ENCODE measurements at regions of chrX and their contacts with region 1.

Region 1: GRCh38 chrX:23782863-23783568 is at the start of gene SAT1:
- DNase-seq: peak; percentile 95
- H3K4me3 ChIP-seq: peak within 1 kb of the TSS; percentile 65 to 80
- H3K27ac ChIP-seq: peak within 1 kb of the TSS; percentile 84 to 86
- H3K4me1 ChIP-seq: no peaks in the 10 kb centered on the region
- H3K27me3 ChIP-seq: no peaks in the 10 kb centered on the region
- CTCF ChIP-seq: peak; percentile 67 to 91 (median 82)
- POLR2A ChIP-seq: peak; percentile 71
- total RNA-seq, gene SAT1: 299 to 459 TPM

Region 2: DNA sequence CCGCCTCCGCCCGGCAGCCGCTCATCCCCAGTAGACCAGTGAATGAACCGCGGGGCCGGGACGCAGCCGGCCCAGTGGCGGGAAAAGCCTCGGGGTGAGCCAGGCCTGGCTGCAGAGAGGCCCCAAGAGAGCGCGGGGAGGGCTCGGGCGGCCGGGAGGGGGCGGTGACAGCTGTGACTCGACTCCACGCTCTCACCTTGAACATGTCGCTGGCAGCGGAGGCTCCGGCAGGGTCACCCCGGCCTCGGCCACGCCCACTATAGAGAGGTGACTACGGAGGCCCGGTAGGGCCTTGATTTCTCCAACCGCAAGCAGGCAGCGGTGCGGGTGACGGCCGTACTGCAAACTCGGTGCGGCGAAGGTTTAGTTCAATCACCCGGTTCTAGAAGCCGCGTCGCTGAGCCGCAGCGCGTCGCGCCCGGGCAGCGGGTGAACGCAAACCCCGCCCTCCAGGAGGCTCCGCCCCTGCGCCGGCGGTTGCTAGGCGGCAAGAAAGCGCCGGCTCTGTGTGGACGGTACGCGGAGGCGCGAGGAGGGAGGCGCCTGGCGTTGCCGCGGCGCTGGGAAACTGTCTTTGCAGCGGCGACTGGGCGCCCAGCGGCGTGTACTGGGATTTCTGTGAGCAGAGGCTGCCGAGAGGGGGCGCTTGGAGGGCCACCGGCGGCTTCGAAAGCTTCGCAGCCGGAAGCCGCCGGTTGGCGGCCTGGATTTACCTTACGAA is 124.6 kb after region 1 on chrX and contains the starts of genes APOO and CXorf58:
- intact Hi-C with region 1: loop called (anchors 10 kb)
- DNase-seq: peak; percentile 93
- H3K4me3 ChIP-seq: peak within 1 kb of the TSS; percentile 59 to 73
- H3K27ac ChIP-seq: peak within 1 kb of the TSS; percentile 81 to 84
- H3K4me1 ChIP-seq: no peaks in the 10 kb centered on the region
- H3K27me3 ChIP-seq: no peaks in the 10 kb centered on the region
- CTCF ChIP-seq: peak; percentile 42 to 87 (median 81)
- POLR2A ChIP-seq: no peak
- total RNA-seq, gene APOO: 29.4 to 31.1 TPM
- total RNA-seq, gene CXorf58: 2.6 to 6.5 TPM